Right lobe of liver (tissue), 6 donors: ENCODE measurements at regions of chrX and their contacts with region 1.

Region 1: GRCh38 chrX:24838629-24839028 is 144.9 kb downstream of the POLA1 start:
- DNase-seq: no peak
- ATAC-seq: peak; percentile 42 to 52 (median 50)
- H3K4me3 ChIP-seq: no peak overlapping the region
- H3K27ac ChIP-seq: no peak overlapping the region
- H3K4me1 ChIP-seq: no peaks in the 10 kb centered on the region
- H3K27me3 ChIP-seq: no peaks in the 10 kb centered on the region
- CTCF ChIP-seq: peak; percentile 53 to 68 (median 58)
- POLR2A ChIP-seq: no peak

Region 2: DNA sequence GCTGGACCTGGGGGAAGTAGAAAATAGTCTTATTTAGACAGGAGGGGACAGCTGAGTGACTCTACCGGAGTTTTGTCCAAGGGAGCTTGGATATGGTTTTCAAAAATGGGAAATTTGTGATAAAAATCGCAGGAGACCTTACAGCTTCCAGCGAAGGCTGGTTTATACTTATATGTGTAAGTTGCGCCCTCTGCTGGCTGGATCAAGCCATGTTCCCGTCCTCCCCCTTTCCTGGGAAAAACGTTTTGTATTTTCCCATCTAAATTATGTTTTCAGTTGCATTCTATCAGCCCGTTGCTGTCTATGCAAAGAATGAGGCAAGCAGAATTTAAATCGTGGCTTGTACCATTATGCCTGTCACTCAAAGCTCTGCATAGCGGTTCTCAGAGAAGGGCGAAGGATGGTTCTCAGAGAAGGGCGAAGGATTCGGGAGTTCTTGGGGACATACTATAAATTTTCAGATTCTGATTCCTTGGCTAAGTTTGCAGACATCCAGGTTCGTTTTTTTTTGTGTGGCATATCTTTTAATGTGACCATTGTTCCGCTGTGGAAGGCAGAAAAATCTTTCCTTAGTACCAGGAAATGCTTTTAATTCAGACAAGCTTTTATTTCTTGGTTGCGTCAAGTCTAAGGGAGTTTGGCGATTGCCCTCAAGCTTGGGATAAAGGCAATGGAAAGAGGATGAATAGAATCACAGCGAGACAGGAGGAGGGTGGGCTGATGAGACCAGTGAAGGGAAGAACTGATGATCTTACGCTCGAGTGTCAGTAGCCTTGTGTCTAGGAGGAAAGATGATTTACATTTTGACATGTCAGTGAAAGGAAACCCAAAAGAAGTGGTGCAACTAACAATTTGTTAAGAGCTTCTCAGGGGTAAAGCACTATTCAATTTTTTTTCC is 305.7 kb after region 1 on chrX:
- intact Hi-C with region 1: loop called in 1 of 2 experiments (anchors 10 kb)
- DNase-seq: peak in 2 of 3 donors; percentile 50 to 69
- ATAC-seq: peak; percentile 65 to 82 (median 79)
- H3K4me3 ChIP-seq: no peak overlapping the region
- H3K27ac ChIP-seq: no peak overlapping the region
- H3K4me1 ChIP-seq: no peaks in the 10 kb centered on the region
- H3K27me3 ChIP-seq: peaks cover 0 to 5% of the 10 kb centered on the region in 2 donors
- CTCF ChIP-seq: peak; percentile 70 to 84 (median 75)
- POLR2A ChIP-seq: no peak